ENCODE measurements at regions of chr4 and their contacts with region 1.

Region 1: GRCh38 chr4:163554870-163555465 is 60.5 kb downstream of the TMA16 start:
- DNase-seq: no peak
- H3K4me3 ChIP-seq: no peak overlapping the region
- H3K27ac ChIP-seq: no peak overlapping the region
- H3K4me1 ChIP-seq: no peaks in the 10 kb centered on the region
- H3K27me3 ChIP-seq: no peaks in the 10 kb centered on the region
- CTCF ChIP-seq: peak; percentile 77

Region 2: GRCh38 chr4:162523171-162523570 is 1031.8 kb before region 1 on chr4:
- CTCF ChIA-PET with region 1: no interaction called
- POLR2A ChIA-PET with region 1: no interaction called
- intact Hi-C with region 1: no loop called
- DNase-seq: peak in 1 of 2 experiments; percentile 36
- H3K4me3 ChIP-seq: no peak overlapping the region
- H3K27ac ChIP-seq: no peak overlapping the region
- H3K4me1 ChIP-seq: no peaks in the 10 kb centered on the region
- H3K27me3 ChIP-seq: no peaks in the 10 kb centered on the region
- CTCF ChIP-seq: no peak

Region 3: DNA sequence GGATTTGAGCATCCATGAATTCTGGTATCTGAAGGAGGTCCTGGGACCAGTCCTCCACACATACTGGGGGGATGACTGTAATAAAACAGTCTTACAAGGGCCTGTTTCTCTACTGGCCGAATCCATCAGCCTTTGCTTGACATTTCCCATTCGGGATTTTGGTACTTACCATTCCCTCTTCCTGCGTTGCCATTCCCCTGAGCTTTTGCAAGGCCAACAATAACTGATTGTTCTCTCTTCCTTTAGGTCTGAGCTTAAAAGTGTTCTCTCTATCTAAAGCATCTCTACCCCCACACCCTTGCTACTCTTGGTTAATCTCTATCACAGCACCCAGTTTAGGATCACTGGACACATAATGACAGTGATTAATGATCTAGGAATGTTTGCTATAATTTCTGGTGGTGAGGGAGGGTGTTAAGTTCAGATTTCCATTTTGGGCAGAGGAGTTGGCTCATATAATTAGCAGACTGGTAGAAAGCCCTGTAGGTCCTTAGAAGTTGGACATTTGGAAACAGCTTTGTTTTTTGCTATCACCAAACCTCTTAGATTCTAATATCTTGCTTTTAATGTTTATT is 31.1 kb before region 1 on chr4:
- CTCF ChIA-PET with region 1: no interaction called
- POLR2A ChIA-PET with region 1: no interaction called
- intact Hi-C with region 1: no loop called
- DNase-seq: no peak
- H3K4me3 ChIP-seq: no peak overlapping the region
- H3K27ac ChIP-seq: no peak overlapping the region
- H3K4me1 ChIP-seq: no peaks in the 10 kb centered on the region
- H3K27me3 ChIP-seq: no peaks in the 10 kb centered on the region
- CTCF ChIP-seq: no peak

Region 4: GRCh38 chr4:163598028-163598427 is 43.1 kb after region 1 on chr4:
- CTCF ChIA-PET with region 1: no interaction called
- POLR2A ChIA-PET with region 1: no interaction called
- intact Hi-C with region 1: no loop called
- DNase-seq: no peak
- H3K4me3 ChIP-seq: no peak overlapping the region
- H3K27ac ChIP-seq: no peak overlapping the region
- H3K4me1 ChIP-seq: no peaks in the 10 kb centered on the region
- H3K27me3 ChIP-seq: no peaks in the 10 kb centered on the region
- CTCF ChIP-seq: no peak

Region 5: GRCh38 chr4:163707873-163708272 is 152.9 kb after region 1 on chr4:
- CTCF ChIA-PET with region 1: interaction called, 10 read pairs
- POLR2A ChIA-PET with region 1: no interaction called
- intact Hi-C with region 1: no loop called
- DNase-seq: no peak
- H3K4me3 ChIP-seq: no peak overlapping the region
- H3K27ac ChIP-seq: no peak overlapping the region
- H3K4me1 ChIP-seq: no peaks in the 10 kb centered on the region
- H3K27me3 ChIP-seq: no peaks in the 10 kb centered on the region
- CTCF ChIP-seq: no peak

Region 6: GRCh38 chr4:163755013-163755412 is 200.0 kb after region 1 on chr4:
- CTCF ChIA-PET with region 1: no interaction called
- POLR2A ChIA-PET with region 1: no interaction called
- intact Hi-C with region 1: loop called (anchors 10 kb)
- DNase-seq: no peak
- H3K4me3 ChIP-seq: no peak overlapping the region
- H3K27ac ChIP-seq: no peak overlapping the region
- H3K4me1 ChIP-seq: no peaks in the 10 kb centered on the region
- H3K27me3 ChIP-seq: no peaks in the 10 kb centered on the region
- CTCF ChIP-seq: no peak

Region 7: DNA sequence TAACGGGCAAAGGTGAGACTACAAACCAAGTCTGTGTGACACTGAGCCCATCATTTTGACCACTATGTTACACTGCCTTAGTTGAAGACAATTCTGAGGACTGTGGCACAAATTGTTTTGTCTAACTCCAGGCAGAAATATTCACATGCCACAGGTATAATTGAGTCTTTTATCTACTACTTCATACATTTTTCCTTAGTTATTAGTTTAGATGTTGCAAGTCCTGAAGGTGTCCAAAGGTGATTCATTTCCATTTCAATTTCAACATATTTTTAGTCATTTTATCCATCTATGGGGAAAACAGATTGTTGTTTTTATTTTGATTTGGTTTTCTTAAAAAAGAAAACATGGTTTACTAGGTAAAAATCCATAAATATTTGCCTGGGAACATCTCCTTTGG is 857.3 kb after region 1 on chr4:
- CTCF ChIA-PET with region 1: no interaction called
- POLR2A ChIA-PET with region 1: no interaction called
- intact Hi-C with region 1: loop called (anchors 5 kb)
- DNase-seq: no peak
- H3K4me3 ChIP-seq: no peak overlapping the region
- H3K27ac ChIP-seq: no peak overlapping the region
- H3K4me1 ChIP-seq: no peaks in the 10 kb centered on the region
- H3K27me3 ChIP-seq: no peaks in the 10 kb centered on the region
- CTCF ChIP-seq: no peak

Region 8: GRCh38 chr4:164748375-164748774 is 1193.4 kb after region 1 on chr4:
- CTCF ChIA-PET with region 1: no interaction called
- POLR2A ChIA-PET with region 1: no interaction called
- intact Hi-C with region 1: loop called (anchors 1 kb)
- DNase-seq: no peak
- H3K4me3 ChIP-seq: no peak overlapping the region
- H3K27ac ChIP-seq: no peak overlapping the region
- H3K4me1 ChIP-seq: no peaks in the 10 kb centered on the region
- H3K27me3 ChIP-seq: no peaks in the 10 kb centered on the region
- CTCF ChIP-seq: peak; percentile 60

Region 9: GRCh38 chr4:165096776-165097175 is 1541.8 kb after region 1 on chr4:
- CTCF ChIA-PET with region 1: interaction called, 3 read pairs
- POLR2A ChIA-PET with region 1: no interaction called
- intact Hi-C with region 1: loop called (anchors 2 kb)
- DNase-seq: no peak
- H3K4me3 ChIP-seq: no peak overlapping the region
- H3K27ac ChIP-seq: no peak overlapping the region
- H3K4me1 ChIP-seq: no peaks in the 10 kb centered on the region
- H3K27me3 ChIP-seq: no peaks in the 10 kb centered on the region
- CTCF ChIP-seq: peak; percentile 64

Measured in PC-9 (cell line).